Pancreas (tissue), 10 donors: ENCODE measurements at regions of chr10 and their contacts with region 1.

Region 1: DNA sequence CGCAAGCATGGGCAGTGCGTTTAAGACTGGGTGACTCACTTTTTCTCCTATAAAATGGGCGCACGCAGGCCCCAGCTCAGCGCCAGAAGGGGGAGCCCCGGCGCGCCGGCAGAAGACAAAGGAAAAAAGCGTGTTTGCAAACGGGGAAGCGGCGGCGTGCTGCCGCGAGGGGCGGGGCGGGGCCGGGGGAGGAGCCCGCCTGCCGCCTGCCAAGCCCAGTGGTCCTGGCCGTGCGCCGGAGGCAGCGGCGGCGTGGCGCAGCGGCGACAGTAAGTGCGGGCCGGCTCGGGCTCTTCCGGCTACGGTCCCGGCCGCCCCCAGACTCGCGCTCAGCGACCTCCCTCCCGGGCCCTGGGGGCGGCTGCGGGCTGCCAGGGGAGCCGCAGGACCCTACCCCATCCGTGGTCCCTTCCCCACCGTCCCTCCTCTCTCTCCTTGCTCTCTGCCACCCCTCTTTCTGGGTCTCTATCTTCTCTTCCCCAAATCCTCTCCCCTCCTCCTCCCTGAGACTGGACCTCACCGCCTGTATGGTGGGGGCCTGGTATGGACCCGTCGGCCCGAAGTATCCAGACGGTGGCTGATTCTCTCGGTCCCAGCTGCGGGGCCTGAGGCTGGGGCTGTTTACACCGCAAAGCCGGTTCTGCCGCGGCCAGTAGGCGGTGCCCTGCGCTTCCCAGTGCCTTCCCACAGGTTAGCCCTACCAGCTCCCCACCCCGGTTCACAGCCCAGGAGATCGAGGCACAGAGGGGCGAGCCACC is at the start of gene SLC29A3:
- DNase-seq: peak; percentile 75 to 92 (median 83)
- ATAC-seq: peak; percentile 94 to 96 (median 95)
- H3K4me3 ChIP-seq: peak within 1 kb of the TSS; percentile 57 to 87 (median 78)
- H3K27ac ChIP-seq: peak within 1 kb of the TSS in 2 of 4 donors; percentile 59 to 67
- H3K4me1 ChIP-seq: peaks cover 0 to 6% (median 0%) of the 10 kb centered on the region in 3 donors
- H3K27me3 ChIP-seq: no peaks in the 10 kb centered on the region
- CTCF ChIP-seq: peak; percentile 14 to 42 (median 26)
- total RNA-seq, gene SLC29A3: 2.2 to 7.0 (median 3.6) TPM

Region 2: GRCh38 chr10:71589617-71590551 is 270.7 kb after region 1 on chr10:
- intact Hi-C with region 1: no loop called
- DNase-seq: no peak
- ATAC-seq: peak in 2 of 4 donors; percentile 49 to 51
- H3K4me3 ChIP-seq: no peak overlapping the region
- H3K27ac ChIP-seq: no peak overlapping the region
- H3K4me1 ChIP-seq: no peaks in the 10 kb centered on the region
- H3K27me3 ChIP-seq: no peaks in the 10 kb centered on the region
- CTCF ChIP-seq: no peak

Region 3: GRCh38 chr10:71608819-71609768 is 289.9 kb after region 1 on chr10:
- intact Hi-C with region 1: loop called in 1 of 3 experiments (anchors 10 kb)
- DNase-seq: peak in 5 of 6 donors; percentile 40 to 89 (median 64)
- ATAC-seq: peak in 3 of 4 donors; percentile 72 to 85 (median 74)
- H3K4me3 ChIP-seq: no peak overlapping the region
- H3K27ac ChIP-seq: no peak overlapping the region
- H3K4me1 ChIP-seq: no peaks in the 10 kb centered on the region
- H3K27me3 ChIP-seq: no peaks in the 10 kb centered on the region
- CTCF ChIP-seq: peak; percentile 39 to 72 (median 56)